GM12878 (cell line): ENCODE measurements at regions of chr19 and their contacts with region 1.

Region 1: GRCh38 chr19:48795055-48795684 is 15.7 kb downstream of the BCAT2 start:
- DNase-seq: peak; percentile 76
- ATAC-seq: peak; percentile 98
- H3K4me3 ChIP-seq: peak overlapping the region; percentile 67; the same call in 1 of the 2 replicates
- H3K27ac ChIP-seq: no peak overlapping the region
- H3K4me1 ChIP-seq: peaks cover 6% of the 10 kb centered on the region
- H3K27me3 ChIP-seq: no peaks in the 10 kb centered on the region
- CTCF ChIP-seq: peak; percentile 87 to 93 (median 91); a peak in 5 of 6 replicates
- EP300 ChIP-seq: no peak; a peak in 1 of 4 replicates
- POLR2A ChIP-seq: peak; percentile 62
- RAD21 ChIP-seq: peak; percentile 84

Region 2: GRCh38 chr19:48780631-48781391 is 14.4 kb before region 1 on chr19:
- CTCF ChIA-PET with region 1: interaction called, 14 read pairs
- POLR2A ChIA-PET with region 1: interaction called, 4 read pairs
- RAD21 ChIA-PET with region 1: interaction called, 7 read pairs
- SMC1A ChIA-PET with region 1: interaction called, 4 read pairs
- in situ Hi-C with region 1: no loop called
- intact Hi-C with region 1: no loop called
- DNase-seq: peak; percentile 54
- ATAC-seq: peak; percentile 71
- H3K4me3 ChIP-seq: no peak overlapping the region
- H3K27ac ChIP-seq: no peak overlapping the region
- H3K4me1 ChIP-seq: peaks cover 3% of the 10 kb centered on the region; the same call in 1 of the 2 replicates
- H3K27me3 ChIP-seq: no peaks in the 10 kb centered on the region
- CTCF ChIP-seq: no peak
- EP300 ChIP-seq: no peak
- POLR2A ChIP-seq: no peak
- RAD21 ChIP-seq: no peak

Region 3: DNA sequence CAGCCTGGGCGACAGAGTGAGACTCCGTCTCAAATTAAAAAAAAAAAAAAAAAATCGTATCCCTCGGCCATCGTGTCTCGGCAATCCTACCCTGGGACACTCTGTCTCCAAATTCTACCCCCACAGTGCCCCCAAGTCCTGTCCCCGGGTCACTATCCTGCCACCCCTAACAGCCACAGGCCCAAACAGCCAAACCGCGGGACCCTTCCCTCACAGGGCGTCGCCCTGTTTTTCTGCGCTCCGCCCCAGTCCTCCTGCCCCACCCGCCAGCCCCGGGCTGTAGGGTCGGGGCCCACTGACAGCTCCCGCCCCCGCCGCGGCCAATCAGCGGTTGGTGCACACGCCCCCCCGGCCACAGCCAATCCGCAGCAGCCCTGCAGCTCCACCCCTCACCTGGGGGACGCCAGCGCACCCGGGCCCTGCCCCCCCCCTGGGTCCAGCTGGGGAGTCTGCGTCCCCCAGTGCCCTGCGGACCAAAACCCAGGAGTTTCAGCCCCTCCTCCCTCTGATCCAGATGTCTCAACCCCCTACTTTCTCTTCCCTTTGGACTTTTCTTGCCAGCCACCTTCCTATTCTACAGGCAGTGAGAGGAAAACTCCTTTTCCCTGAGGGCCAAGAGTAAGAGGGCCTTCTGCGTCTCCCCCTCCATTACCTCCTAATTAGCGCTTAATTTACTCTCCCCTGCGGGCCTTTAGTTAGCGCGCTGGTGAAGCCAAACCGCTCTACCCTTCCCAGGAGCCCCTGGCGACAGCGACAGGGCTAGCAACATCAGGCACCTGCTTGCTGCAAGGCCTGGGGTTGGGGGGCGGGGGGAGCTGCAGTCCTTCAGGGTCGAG is 17.1 kb after region 1 on chr19:
- CTCF ChIA-PET with region 1: interaction called, 31 read pairs
- POLR2A ChIA-PET with region 1: interaction called, 8 read pairs
- RAD21 ChIA-PET with region 1: interaction called, 27 read pairs
- SMC1A ChIA-PET with region 1: interaction called, 13 read pairs
- in situ Hi-C with region 1: no loop called
- intact Hi-C with region 1: no loop called
- DNase-seq: no peak
- ATAC-seq: peak; percentile 84
- H3K4me3 ChIP-seq: no peak overlapping the region; the same call in 1 of the 2 replicates
- H3K27ac ChIP-seq: no peak overlapping the region
- H3K4me1 ChIP-seq: peaks cover 12% of the 10 kb centered on the region; the same call in 1 of the 2 replicates
- H3K27me3 ChIP-seq: no peaks in the 10 kb centered on the region
- CTCF ChIP-seq: no peak
- EP300 ChIP-seq: no peak
- POLR2A ChIP-seq: peak; percentile 60
- RAD21 ChIP-seq: no peak

Region 4: GRCh38 chr19:48826606-48827020 is 31.4 kb after region 1 on chr19:
- CTCF ChIA-PET with region 1: interaction called, 40 read pairs
- POLR2A ChIA-PET with region 1: no interaction called
- RAD21 ChIA-PET with region 1: interaction called, 8 read pairs
- SMC1A ChIA-PET with region 1: interaction called, 7 read pairs
- in situ Hi-C with region 1: no loop called
- intact Hi-C with region 1: no loop called
- DNase-seq: no peak
- ATAC-seq: no peak
- H3K4me3 ChIP-seq: no peak overlapping the region
- H3K27ac ChIP-seq: no peak overlapping the region
- H3K4me1 ChIP-seq: no peaks in the 10 kb centered on the region
- H3K27me3 ChIP-seq: no peaks in the 10 kb centered on the region
- CTCF ChIP-seq: no peak
- EP300 ChIP-seq: no peak
- POLR2A ChIP-seq: no peak
- RAD21 ChIP-seq: no peak

Region 5: DNA sequence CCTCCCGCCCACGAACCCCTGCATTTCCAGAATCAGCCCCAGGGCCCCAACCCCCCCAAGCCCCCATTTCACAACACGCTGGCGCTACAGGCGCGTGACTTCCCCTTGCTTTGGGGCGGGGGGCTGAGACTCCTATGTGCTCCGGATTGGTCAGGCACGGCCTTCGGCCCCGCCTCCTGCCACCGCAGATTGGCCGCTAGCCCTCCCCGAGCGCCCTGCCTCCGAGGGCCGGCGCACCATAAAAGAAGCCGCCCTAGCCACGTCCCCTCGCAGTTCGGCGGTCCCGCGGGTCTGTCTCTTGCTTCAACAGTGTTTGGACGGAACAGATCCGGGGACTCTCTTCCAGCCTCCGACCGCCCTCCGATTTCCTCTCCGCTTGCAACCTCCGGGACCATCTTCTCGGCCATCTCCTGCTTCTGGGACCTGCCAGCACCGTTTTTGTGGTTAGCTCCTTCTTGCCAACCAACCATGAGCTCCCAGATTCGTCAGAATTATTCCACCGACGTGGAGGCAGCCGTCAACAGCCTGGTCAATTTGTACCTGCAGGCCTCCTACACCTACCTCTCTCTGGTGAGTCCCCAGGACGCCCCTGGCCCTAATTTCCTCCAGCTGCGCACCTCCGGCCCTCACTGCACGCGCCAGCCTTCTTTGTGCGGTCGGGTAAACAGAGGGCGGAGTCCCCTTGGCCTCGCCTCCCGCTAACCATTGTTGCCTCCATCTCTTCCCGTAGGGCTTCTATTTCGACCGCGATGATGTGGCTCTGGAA is 170.1 kb after region 1 on chr19 and contains the start of gene FTL:
- CTCF ChIA-PET with region 1: interaction called, 40 read pairs
- POLR2A ChIA-PET with region 1: interaction called, 5 read pairs
- RAD21 ChIA-PET with region 1: interaction called, 20 read pairs
- SMC1A ChIA-PET with region 1: interaction called, 9 read pairs
- in situ Hi-C with region 1: loop called (anchors 5 kb)
- intact Hi-C with region 1: no loop called
- DNase-seq: peak; percentile 82
- ATAC-seq: peak; percentile 79
- H3K4me3 ChIP-seq: peak within 1 kb of the TSS; percentile 93
- H3K27ac ChIP-seq: peak within 1 kb of the TSS; percentile 84
- H3K4me1 ChIP-seq: peaks cover 41% of the 10 kb centered on the region
- H3K27me3 ChIP-seq: no peaks in the 10 kb centered on the region
- CTCF ChIP-seq: no peak
- EP300 ChIP-seq: no peak
- POLR2A ChIP-seq: peak; percentile 95
- RAD21 ChIP-seq: no peak
- polyA plus RNA-seq, gene FTL: 5,502 to 8,913 TPM

Region 6: GRCh38 chr19:48993175-48994034 is 198.2 kb after region 1 on chr19 and contains the starts of genes GYS1 and RUVBL2:
- CTCF ChIA-PET with region 1: interaction called, 21 read pairs
- POLR2A ChIA-PET with region 1: interaction called, 3 read pairs
- RAD21 ChIA-PET with region 1: interaction called, 10 read pairs
- SMC1A ChIA-PET with region 1: interaction called, 4 read pairs
- in situ Hi-C with region 1: no loop called
- intact Hi-C with region 1: no loop called
- DNase-seq: peak; percentile 98
- ATAC-seq: peak; percentile 96
- H3K4me3 ChIP-seq: peak within 1 kb of the TSS; percentile 93
- H3K27ac ChIP-seq: peak within 1 kb of the TSS; percentile 86
- H3K4me1 ChIP-seq: peaks cover 3% of the 10 kb centered on the region
- H3K27me3 ChIP-seq: no peaks in the 10 kb centered on the region
- CTCF ChIP-seq: peak; percentile 98; a peak in 5 of 6 replicates
- EP300 ChIP-seq: no peak
- POLR2A ChIP-seq: peak; percentile 90
- RAD21 ChIP-seq: 0 out of 2 replicates have a peak, but pooled peaks have one; percentile 32
- polyA plus RNA-seq, gene GYS1: 3.7 to 5.8 TPM
- polyA plus RNA-seq, gene RUVBL2: 33.8 to 70.6 TPM